RWPE1 (cell line): ENCODE measurements at regions of chr1 and their contacts with region 1.

Region 1: GRCh38 chr1:203326830-203327683 is 21.7 kb downstream of the BTG2 start:
- DNase-seq: peak; percentile 99
- H3K27ac ChIP-seq: peak overlapping the region; percentile 90
- CTCF ChIP-seq: no peak

Region 2: GRCh38 chr1:203273206-203273868 is 53.7 kb before region 1 on chr1:
- CTCF ChIA-PET with region 1: interaction called, 291 read pairs
- POLR2A ChIA-PET with region 1: interaction called, 4 read pairs
- DNase-seq: peak; percentile 89
- H3K27ac ChIP-seq: peak overlapping the region; percentile 55
- CTCF ChIP-seq: peak; percentile 98

Region 3: GRCh38 chr1:203280996-203281395 is 46.1 kb before region 1 on chr1:
- CTCF ChIA-PET with region 1: interaction called, 13 read pairs
- POLR2A ChIA-PET with region 1: no interaction called
- DNase-seq: peak; percentile 92
- H3K27ac ChIP-seq: peak overlapping the region; percentile 64
- CTCF ChIP-seq: no peak; the same call in 1 of the 2 replicates